ENCODE measurements at regions of chr20 and their contacts with region 1.

Region 1: DNA sequence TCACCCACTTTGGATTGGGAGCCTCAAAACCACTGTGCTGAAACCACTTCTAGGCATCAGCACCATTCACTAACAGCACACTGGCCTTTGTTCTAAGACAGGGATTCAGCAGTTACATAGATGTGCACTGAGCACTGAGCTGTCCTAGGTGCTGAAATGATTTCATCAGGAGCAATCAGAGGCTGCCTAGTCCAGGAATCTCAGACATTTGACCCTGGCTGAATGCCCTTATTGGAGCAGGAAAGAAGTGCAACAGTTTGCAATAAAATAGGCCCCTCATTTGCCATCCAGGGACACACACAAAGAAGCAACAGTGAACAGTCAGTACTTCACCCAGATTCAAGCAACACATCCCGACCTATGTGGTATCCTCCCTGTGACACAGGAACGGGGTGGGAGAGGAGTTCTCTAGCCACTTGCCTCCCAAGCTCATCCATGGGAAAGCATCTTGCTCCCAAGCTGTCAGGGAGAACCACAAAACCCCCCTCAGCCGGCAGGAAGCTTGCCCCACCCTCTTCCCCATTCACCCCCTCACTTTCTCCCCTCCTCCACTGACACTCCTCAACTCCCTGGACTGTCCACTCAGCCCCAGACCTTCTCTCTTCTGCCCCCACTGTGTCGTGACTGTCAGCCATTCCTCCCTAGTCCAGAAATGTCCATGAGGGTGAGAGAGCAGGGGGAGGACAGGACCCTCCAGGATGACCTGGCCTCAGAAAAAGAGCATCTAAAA is 304.4 kb downstream of the PREX1 start:
- DNase-seq: no peak
- ATAC-seq: peak; percentile 75
- H3K4me3 ChIP-seq: no peak overlapping the region
- H3K27ac ChIP-seq: no peak overlapping the region
- H3K4me1 ChIP-seq: no peaks in the 10 kb centered on the region
- H3K27me3 ChIP-seq: no peaks in the 10 kb centered on the region; a peak in 1 of 4 replicates
- CTCF ChIP-seq: no peak
- EP300 ChIP-seq: no peak
- POLR2A ChIP-seq: no peak
- RAD21 ChIP-seq: no peak

Region 2: GRCh38 chr20:47886460-47887041 is 636.8 kb before region 1 on chr20:
- CTCF ChIA-PET with region 1: no interaction called
- POLR2A ChIA-PET with region 1: no interaction called
- RAD21 ChIA-PET with region 1: no interaction called
- SMC1A ChIA-PET with region 1: no interaction called
- in situ Hi-C with region 1: loop called (anchors 5 kb)
- intact Hi-C with region 1: loop called (anchors 5 kb)
- DNase-seq: no peak
- ATAC-seq: no peak; the same call in 2 of the 3 replicates
- H3K4me3 ChIP-seq: no peak overlapping the region
- H3K27ac ChIP-seq: no peak overlapping the region
- H3K4me1 ChIP-seq: no peaks in the 10 kb centered on the region
- H3K27me3 ChIP-seq: peaks cover 0 to 2% of the 10 kb centered on the region in 2 experiments; a peak in 2 of 4 replicates
- CTCF ChIP-seq: no peak
- EP300 ChIP-seq: no peak
- POLR2A ChIP-seq: no peak
- RAD21 ChIP-seq: no peak

Measured in GM12878 (cell line).